HCT116 (cell line): ENCODE measurements at regions of chr7 and their contacts with region 1.

Region 1: DNA sequence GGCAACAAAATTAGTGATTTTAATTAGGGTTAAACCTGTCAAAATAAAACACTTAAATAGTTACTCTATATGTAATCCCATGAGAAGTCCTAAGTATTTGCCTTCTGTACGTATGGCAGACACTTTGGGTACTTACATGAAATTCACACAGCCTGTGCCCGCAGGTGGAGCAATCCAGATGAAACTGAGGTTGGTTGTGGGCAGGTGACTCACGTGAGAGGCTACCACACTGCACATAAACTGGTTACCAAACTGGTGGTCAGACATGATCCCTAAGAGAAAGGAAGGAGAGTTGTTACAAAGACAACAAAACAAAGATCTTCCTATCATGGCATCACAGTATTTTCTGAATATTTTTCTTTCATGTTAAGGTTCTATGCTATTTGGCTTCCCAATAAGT is 156.1 kb downstream of the RELN start:
- DNase-seq: no peak
- ATAC-seq: no peak
- H3K4me3 ChIP-seq: no peak overlapping the region
- H3K27ac ChIP-seq: no peak overlapping the region
- H3K4me1 ChIP-seq: no peaks in the 10 kb centered on the region
- H3K27me3 ChIP-seq: peaks cover 38% of the 10 kb centered on the region
- CTCF ChIP-seq: no peak
- POLR2A ChIP-seq: no peak
- RAD21 ChIP-seq: no peak

Region 2: GRCh38 chr7:103781409-103781808 is 52.0 kb before region 1 on chr7:
- CTCF ChIA-PET with region 1: no interaction called
- POLR2A ChIA-PET with region 1: no interaction called
- RAD21 ChIA-PET with region 1: no interaction called
- intact Hi-C with region 1: loop called (anchors 5 kb)
- DNase-seq: no peak
- ATAC-seq: no peak
- H3K4me3 ChIP-seq: no peak overlapping the region
- H3K27ac ChIP-seq: no peak overlapping the region
- H3K4me1 ChIP-seq: no peaks in the 10 kb centered on the region
- H3K27me3 ChIP-seq: peaks cover 33% of the 10 kb centered on the region
- CTCF ChIP-seq: no peak
- POLR2A ChIP-seq: no peak
- RAD21 ChIP-seq: no peak